ENCODE measurements at regions of chr9 and their contacts with region 1.

Region 1: DNA sequence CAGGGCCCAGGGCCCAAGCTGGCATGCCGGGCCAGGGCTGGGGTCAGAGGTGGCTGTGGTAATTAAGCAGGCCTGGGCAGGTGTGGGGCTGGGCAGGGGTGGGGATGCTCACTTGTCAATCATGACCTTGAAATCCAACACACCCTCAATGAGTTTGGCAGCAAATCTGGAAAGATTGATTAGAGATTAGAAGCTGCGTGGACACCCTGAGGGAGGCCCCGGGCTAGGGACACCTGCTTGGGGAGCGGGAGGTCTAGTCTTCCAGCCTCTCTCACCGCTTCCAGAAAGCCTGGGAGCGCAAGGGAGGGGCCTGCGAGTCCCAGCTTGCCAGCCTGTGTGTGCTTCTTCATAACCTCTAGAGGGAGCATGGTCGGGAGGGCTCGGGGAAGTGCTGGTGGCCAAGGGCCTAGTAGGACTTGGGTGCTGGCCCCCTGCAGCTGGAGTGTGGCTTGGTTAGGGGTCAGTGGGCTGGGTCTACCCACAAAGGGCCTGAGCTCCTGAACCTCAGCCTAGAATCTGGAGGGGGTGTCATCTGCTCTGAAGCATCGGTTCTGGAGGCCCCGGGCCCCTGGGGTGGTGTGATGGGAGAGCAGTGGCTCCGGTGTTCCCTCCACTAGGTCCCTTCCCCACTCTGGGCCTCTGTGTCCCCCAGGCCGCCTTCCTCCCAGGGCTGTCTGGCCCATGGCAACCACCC is 7.5 kb downstream of the CRAT start:
- DNase-seq: peak; percentile 77
- ATAC-seq: peak; percentile 89
- H3K4me3 Mint-ChIP-seq: no peak overlapping the region
- H3K27ac Mint-ChIP-seq: no peak overlapping the region
- H3K4me1 Mint-ChIP-seq: peaks cover 6% of the 10 kb centered on the region
- H3K27me3 Mint-ChIP-seq: peaks cover 15% of the 10 kb centered on the region
- CTCF ChIP-seq: peak; percentile 67

Region 2: DNA sequence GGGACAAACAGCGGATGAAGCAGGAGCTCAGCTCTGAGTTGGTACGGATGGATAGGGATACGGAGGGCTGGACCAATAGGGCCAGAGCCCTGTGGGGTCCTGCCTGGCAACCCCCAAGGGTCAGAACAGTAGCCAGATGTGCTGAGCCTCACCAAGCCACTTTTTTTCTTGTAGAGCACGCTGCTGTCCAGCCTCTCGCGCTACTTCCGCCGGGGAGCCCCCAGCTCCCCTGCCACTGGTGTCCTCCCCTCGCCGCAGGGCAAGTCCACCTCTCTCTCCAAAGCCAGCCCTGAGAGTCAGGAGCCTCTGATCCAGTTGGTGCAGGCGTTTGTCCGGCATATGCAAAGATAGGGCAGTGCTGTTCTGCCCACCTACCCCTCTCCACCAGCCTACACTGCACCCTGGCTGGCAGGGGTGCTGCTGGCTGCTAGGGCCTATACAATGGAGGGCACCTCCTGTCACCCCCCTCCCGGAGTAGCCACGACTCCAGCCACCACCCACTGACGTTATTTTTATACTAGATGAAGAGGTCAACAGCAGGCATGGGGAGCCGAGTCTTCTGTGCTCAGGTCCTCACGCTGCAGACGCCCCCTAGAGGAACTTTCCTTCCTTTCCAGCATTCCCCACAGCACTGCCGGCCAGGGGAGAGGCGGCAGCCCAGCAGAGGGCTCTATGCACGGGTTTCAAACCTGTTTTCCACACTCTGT is 96.6 kb before region 1 on chr9:
- CTCF ChIA-PET with region 1: no interaction called
- POLR2A ChIA-PET with region 1: no interaction called
- DNase-seq: peak; percentile 80
- ATAC-seq: peak; percentile 86
- H3K4me3 Mint-ChIP-seq: no peak overlapping the region
- H3K27ac Mint-ChIP-seq: peak overlapping the region; percentile 82; the same call in 1 of the 2 replicates
- H3K4me1 Mint-ChIP-seq: 0 out of 2 replicates have a peak, but pooled peaks cover 2% of the 10 kb centered on the region
- H3K27me3 Mint-ChIP-seq: no peaks in the 10 kb centered on the region
- CTCF ChIP-seq: peak; percentile 74

Region 3: DNA sequence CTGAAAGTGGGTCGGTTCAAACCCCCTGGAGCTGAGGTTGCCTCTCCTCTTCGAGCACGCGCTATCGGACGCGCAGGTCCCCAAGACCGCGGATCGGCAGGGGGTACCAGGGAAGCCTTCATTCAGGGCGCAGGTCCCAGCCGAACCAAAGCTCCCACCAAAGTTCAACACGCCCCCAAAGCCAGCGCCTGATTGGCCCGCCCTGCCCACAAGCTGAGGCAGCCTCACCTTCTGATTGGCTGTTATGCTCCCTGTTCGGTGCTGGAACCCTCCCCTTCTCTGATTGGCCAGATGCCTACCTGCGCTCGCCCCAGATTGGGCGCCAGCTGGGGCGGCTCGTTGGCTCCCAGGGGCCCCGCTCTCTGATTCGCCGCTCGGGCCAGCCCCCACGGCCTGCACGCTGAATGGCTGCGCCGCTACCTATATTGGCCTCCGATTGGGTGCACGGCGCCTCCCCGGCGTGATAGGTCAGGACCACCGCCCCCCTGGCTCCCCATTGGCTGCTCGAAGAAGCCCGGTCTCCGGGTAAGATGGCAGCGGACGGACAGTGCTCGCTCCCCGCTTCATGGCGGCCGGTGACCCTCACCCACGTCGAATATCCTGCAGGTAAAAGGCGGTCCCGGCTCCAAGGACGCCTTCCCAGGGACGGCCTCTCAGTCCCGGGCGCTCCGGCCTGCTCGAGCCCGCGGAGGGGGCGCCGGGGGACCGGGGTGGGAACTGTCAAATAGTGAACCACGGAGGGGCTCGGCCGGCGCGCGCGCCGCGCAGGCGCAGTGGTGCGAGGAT is 22.3 kb before region 1 on chr9 and contains the start of gene DOLPP1:
- CTCF ChIA-PET with region 1: interaction called, 10 read pairs
- POLR2A ChIA-PET with region 1: no interaction called
- DNase-seq: peak; percentile 99
- ATAC-seq: peak; percentile 95
- H3K4me3 Mint-ChIP-seq: peak within 1 kb of the TSS; percentile 92
- H3K27ac Mint-ChIP-seq: peak within 1 kb of the TSS; percentile 84
- H3K4me1 Mint-ChIP-seq: peaks cover 8% of the 10 kb centered on the region
- H3K27me3 Mint-ChIP-seq: no peaks in the 10 kb centered on the region
- CTCF ChIP-seq: no peak
- total RNA-seq, gene DOLPP1: 30.4 to 35.6 TPM (median 32.7 TPM) in 3 replicates

Region 4: GRCh38 chr9:129125476-129125875 is 22.4 kb after region 1 on chr9:
- CTCF ChIA-PET with region 1: interaction called, 16 read pairs
- POLR2A ChIA-PET with region 1: no interaction called
- DNase-seq: no peak
- ATAC-seq: no peak
- H3K4me3 Mint-ChIP-seq: no peak overlapping the region
- H3K27ac Mint-ChIP-seq: peak overlapping the region; percentile 84
- H3K4me1 Mint-ChIP-seq: peaks cover 25% of the 10 kb centered on the region
- H3K27me3 Mint-ChIP-seq: no peaks in the 10 kb centered on the region
- CTCF ChIP-seq: no peak

Region 5: GRCh38 chr9:129270903-129271431 is 167.9 kb after region 1 on chr9:
- CTCF ChIA-PET with region 1: no interaction called
- POLR2A ChIA-PET with region 1: no interaction called
- DNase-seq: no peak
- ATAC-seq: no peak
- H3K4me3 Mint-ChIP-seq: no peak overlapping the region
- H3K27ac Mint-ChIP-seq: peak overlapping the region; percentile 12; the same call in 1 of the 2 replicates
- H3K4me1 Mint-ChIP-seq: peaks cover 15% of the 10 kb centered on the region
- H3K27me3 Mint-ChIP-seq: peaks cover 3% of the 10 kb centered on the region; the same call in 1 of the 2 replicates
- CTCF ChIP-seq: no peak

Measured in WTC11 (cell line).